ENCODE measurements at regions of chr1 and their contacts with region 1.

Region 1: GRCh38 chr1:166479052-166479631 is 312.3 kb upstream of the FAM78B start:
- H3K4me3 Mint-ChIP-seq: no peak overlapping the region
- H3K27ac Mint-ChIP-seq: no peak overlapping the region
- H3K4me1 Mint-ChIP-seq: no peaks in the 10 kb centered on the region
- H3K27me3 Mint-ChIP-seq: peaks cover 2% of the 10 kb centered on the region

Region 2: GRCh38 chr1:165924117-165924516 is 555.0 kb before region 1 on chr1:
- intact Hi-C with region 1: loop called (anchors 2 kb)
- H3K4me3 Mint-ChIP-seq: no peak overlapping the region
- H3K27ac Mint-ChIP-seq: no peak overlapping the region
- H3K4me1 Mint-ChIP-seq: no peaks in the 10 kb centered on the region
- H3K27me3 Mint-ChIP-seq: peaks cover 3% of the 10 kb centered on the region

Region 3: GRCh38 chr1:166258017-166258416 is 221.1 kb before region 1 on chr1:
- intact Hi-C with region 1: no loop called
- H3K4me3 Mint-ChIP-seq: no peak overlapping the region
- H3K27ac Mint-ChIP-seq: no peak overlapping the region
- H3K4me1 Mint-ChIP-seq: no peaks in the 10 kb centered on the region
- H3K27me3 Mint-ChIP-seq: no peaks in the 10 kb centered on the region

Measured in dendritic cell treated with granulocyte-macrophage colony-stimulating factor and Interleukin-4, amounts not matched to agents 40 ng/mL and 50 ng/mL, for 4 days (primary cell).